Ascending aorta (tissue), 2 donors: ENCODE measurements at regions of chr11 and their contacts with region 1.

Region 1: DNA sequence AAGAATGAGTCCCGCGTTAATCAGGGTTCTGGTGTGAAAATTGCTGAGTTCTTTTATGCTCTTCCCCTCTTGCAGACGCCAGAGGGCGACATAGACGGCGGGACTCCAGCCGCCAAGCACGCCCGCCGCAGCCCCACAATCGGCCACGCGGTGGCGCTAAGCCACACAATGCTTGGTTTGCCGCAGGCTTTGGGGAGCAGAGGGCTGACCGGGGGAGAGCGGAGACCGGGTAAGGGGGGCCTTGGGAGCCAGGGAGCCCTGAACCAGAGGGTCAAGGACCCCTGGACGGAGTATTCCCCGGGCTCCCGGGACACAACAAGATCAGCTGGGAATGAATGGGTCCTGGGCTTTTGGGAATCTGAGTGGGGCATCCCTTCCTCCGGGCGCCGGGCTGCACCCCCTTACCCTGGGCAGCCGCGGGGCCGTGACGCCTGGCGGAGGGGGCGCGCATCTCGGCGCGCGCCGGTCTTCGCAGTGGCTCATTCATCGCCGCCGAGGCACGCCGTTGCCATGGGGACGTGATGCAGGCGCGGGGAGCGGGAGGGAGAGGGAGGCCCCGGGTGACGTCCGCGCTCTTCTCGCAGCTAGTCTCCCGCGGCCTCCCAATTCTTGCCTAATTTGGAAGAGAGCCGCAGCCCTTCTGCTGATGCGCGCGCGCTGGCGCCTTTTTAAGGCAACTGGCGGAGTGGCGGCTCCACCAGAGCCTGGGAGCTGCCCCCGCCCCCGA is 12.2 kb upstream of the NPAS4 start:
- DNase-seq: peak; percentile 81 to 95
- H3K4me3 ChIP-seq: peak overlapping the region; percentile 47 to 67
- H3K27ac ChIP-seq: peak overlapping the region; percentile 73
- H3K4me1 ChIP-seq: peaks cover 11 to 21% of the 10 kb centered on the region in 2 donors
- H3K27me3 ChIP-seq: no peaks in the 10 kb centered on the region
- CTCF ChIP-seq: peak; percentile 99 to 100 (median 100)

Region 2: GRCh38 chr11:66222358-66223149 is 186.1 kb before region 1 on chr11:
- intact Hi-C with region 1: no loop called
- DNase-seq: peak; percentile 58 to 94
- H3K4me3 ChIP-seq: peak overlapping the region in 1 of 2 donors; percentile 19
- H3K27ac ChIP-seq: no peak overlapping the region
- H3K4me1 ChIP-seq: no peaks in the 10 kb centered on the region
- H3K27me3 ChIP-seq: no peaks in the 10 kb centered on the region
- CTCF ChIP-seq: peak; percentile 97 to 99 (median 99)

Region 3: DNA sequence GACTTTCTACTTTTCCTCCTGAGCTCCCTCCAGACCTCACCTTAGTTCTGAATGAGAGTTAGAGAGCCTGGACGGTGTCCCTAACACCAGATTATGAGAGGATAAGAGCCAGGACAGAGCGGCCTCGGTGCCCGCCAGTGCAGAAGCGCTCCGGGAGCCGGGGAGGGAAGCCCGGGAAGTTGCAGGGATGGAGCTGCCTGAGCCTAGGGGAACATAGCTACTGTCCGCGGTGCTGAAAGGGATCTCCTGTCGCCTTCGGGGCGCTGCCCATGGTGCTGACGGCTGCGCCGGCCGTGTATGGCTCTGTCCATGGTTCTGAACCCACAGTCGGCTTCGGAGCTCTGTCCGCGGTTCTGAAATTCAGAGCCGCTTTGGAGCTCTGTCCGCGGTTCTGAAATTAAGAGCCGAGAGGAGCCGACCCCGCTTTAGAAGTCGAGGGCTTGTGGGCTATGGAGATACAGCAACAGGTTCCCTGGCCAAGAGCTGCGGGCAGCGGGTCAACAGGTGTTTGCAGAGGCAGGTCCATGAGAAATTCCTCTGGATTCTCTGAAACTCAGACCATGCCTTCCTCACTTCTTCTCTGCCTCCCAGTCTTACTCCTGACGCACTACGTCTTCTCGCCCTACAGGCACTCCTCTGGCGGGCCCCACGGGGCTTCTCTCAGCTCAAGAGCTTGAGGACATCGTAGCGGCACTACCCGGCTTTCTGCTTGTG is 13.0 kb after region 1 on chr11:
- intact Hi-C with region 1: loop called (anchors 1 kb)
- DNase-seq: peak; percentile 40 to 96
- H3K4me3 ChIP-seq: peak overlapping the region in 1 of 2 donors; percentile 37
- H3K27ac ChIP-seq: peak overlapping the region; percentile 21 to 62
- H3K4me1 ChIP-seq: peaks cover 22 to 42% of the 10 kb centered on the region in 2 donors
- H3K27me3 ChIP-seq: no peaks in the 10 kb centered on the region
- CTCF ChIP-seq: no peak

Region 4: DNA sequence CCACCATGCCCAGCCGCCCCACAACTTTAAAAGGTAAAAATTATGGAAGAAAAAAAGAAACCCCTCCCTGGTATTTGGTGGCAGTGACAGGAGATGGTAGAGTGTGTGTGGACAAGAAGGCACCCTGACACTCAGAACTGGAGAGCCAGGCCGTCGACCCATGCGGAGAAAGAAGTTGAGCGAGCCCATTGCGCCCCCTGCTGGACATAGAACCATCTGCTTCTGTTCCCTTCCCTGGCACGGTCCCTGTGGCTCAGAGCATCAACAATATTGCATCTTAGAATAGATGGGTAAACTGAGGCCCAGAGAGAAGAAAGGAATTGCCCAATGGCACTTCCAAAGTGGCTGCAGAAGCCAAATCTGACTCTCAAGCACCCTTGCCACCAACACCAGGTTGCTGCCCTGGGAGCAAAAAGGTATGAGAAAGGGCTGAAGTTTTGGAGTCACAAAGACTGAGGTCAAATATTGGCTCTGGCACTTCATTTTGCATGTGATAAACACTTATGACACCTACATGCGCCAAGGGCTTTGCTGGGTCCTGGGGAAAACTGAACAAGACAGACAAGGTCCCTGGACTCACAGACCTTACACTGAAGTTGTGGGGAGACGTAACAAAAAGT is 21.4 kb after region 1 on chr11:
- intact Hi-C with region 1: loop called (anchors 1 kb)
- DNase-seq: peak in 1 of 2 donors; percentile 84
- H3K4me3 ChIP-seq: no peak overlapping the region
- H3K27ac ChIP-seq: no peak overlapping the region
- H3K4me1 ChIP-seq: no peaks in the 10 kb centered on the region
- H3K27me3 ChIP-seq: no peaks in the 10 kb centered on the region
- CTCF ChIP-seq: peak; percentile 66 to 86 (median 80)

Region 5: DNA sequence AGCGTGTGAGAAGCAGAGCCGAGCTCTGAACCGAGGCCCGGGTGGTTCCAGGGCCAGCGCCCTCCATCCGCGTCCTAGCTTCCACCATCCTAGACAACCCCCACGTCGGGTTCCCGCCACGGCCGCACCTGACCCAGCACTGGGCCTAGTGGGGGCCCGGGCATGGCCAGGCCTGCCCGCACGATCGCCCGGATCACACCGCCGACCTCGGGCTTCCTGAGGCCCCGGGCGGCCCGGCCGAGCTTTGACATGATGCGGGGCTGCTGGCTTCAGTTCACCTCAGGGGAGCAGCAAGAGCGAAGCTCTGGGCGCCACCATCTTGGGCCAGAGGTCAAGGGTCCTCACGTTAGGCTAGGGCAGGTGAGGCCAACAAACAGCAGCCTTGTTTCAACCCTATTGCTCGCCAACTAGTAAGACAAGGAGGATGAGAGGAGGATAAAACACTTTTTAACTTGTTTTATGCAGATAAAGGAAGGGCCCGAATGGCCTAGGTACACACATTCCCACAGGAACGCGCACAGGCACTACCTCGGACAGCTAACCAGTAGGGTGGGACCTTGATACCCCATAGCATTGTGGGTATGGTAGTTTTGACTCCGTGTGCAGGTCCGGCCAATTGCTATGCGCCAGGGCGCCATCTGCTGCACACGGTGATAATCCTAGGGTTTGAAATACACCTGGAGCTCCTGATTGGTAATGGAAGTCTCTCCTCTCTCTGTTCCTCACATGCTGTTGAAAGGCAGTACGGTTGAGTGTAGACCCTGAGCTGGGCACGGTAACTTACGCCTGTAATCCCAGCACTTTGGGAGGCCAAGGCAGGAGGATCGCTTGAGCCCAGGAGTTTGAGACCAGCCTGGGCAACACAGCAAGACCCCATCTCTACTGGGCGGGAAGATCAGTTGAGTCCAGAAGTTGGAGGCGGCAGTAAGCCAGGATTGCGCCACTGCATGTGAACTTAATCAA is 30.1 kb after region 1 on chr11 and contains the start of gene MRPL11:
- intact Hi-C with region 1: loop called (anchors 2 kb)
- DNase-seq: peak; percentile 53 to 93
- H3K4me3 ChIP-seq: peak within 1 kb of the TSS; percentile 59 to 82
- H3K27ac ChIP-seq: peak within 1 kb of the TSS; percentile 58 to 74
- H3K4me1 ChIP-seq: peaks cover 3 to 4% of the 10 kb centered on the region in 2 donors
- H3K27me3 ChIP-seq: no peaks in the 10 kb centered on the region
- CTCF ChIP-seq: peak; percentile 58 to 78 (median 61)
- total RNA-seq, gene MRPL11: 96.2 TPM

Region 6: DNA sequence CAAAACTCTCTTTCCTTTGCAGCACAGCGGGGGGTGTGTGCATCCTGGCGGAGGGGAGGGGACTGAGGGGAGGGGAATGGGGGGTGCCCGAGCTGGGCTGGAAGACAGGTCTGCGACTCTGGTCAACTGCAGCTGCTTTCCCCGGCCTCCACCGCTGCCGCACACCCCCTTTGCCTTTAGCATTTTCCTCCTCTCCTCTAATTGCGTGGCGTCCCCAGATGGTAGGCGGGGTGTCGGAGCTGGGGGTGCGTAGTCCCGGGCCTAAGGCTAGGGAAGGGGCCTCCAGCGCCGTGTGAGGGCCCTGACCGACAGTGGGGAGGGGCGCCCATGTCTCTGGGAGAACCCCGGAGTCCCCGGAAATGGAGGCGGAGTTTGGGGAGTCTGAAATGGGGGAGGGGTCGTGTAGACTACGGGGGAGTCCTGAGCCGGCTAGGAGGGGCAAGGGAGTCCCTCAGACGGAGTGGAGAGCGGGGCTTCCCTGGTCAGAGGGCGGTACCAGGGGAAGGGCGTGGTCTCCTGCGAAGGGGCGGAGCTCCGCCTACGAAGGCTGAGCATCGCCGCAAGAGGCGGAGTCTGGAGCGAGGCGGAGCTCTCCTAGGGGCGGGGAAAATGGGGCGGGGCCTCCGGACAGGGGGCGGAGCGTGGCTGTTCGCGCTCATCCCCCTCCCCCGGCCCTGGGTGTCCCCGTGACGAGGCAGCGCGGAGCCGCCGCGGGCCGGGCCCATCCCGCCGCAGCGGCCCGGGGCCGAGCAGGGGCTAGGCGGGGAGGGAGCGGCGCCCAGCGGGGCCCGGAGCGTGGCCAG is 57.8 kb after region 1 on chr11 and contains the start of gene PELI3:
- intact Hi-C with region 1: loop called (anchors 2 kb)
- DNase-seq: peak; percentile 59 to 96
- H3K4me3 ChIP-seq: peak within 1 kb of the TSS; percentile 77 to 92
- H3K27ac ChIP-seq: peak within 1 kb of the TSS; percentile 66 to 69
- H3K4me1 ChIP-seq: peaks cover 10 to 14% of the 10 kb centered on the region in 2 donors
- H3K27me3 ChIP-seq: no peaks in the 10 kb centered on the region
- CTCF ChIP-seq: no peak
- total RNA-seq, gene PELI3: 13.2 TPM

Region 7: GRCh38 chr11:66835768-66836405 is 427.2 kb after region 1 on chr11:
- intact Hi-C with region 1: loop called (anchors 10 kb)
- DNase-seq: no peak
- H3K4me3 ChIP-seq: no peak overlapping the region
- H3K27ac ChIP-seq: no peak overlapping the region
- H3K4me1 ChIP-seq: no peaks in the 10 kb centered on the region
- H3K27me3 ChIP-seq: no peaks in the 10 kb centered on the region
- CTCF ChIP-seq: no peak